Mucosa of descending colon (tissue), 3 donors: ENCODE measurements at regions of chr7 and their contacts with region 1.

Region 1: DNA sequence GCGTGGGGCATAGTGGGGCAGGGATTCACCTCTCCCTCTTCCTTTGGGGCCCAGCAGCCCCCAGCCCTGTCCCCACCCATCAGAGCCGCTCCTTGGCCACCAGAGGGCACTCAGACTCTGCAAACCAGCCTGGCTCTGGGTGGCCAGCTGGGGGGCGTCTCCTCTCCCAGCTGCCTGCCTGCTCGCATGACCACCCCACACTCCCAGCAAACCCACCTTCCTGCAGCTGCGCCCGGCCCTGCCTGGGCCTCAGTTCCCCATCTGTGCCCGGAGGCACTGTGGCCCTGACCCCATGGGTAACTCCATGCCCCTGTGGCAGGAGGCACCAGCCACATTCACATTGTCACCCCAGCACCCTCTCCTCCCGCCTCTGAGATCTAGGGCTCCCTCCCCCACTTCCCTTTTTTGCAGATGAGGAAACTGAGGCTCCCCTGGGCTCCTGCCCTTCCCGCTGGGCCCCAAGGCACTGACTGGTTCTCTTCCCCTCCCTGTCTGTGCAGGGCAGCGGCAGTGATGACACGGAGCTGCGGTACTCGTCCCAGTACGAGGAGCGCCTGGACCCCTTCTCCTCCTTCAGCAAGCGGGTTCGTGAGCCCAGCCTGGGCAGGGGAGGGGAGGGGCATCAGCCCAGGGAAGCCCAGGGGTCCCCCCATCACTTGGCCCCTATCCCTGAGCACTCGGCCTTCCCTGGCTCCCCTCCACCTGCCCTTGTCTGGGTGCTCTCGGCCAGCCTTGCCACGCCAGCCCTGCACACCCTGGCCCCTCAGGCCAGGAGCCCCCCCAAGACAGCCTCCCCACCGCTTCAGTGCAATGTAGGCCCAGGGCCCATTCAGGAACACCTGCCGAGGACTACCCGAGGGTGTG is 6.9 kb upstream of the SH2B2 start:
- DNase-seq: peak in 2 of 3 donors; percentile 48 to 55
- ATAC-seq: peak; percentile 72
- H3K4me3 ChIP-seq: no peak overlapping the region
- H3K4me1 ChIP-seq: peaks cover 4% of the 10 kb centered on the region
- CTCF ChIP-seq: peak; percentile 40

Region 2: GRCh38 chr7:102111061-102111743 is 168.6 kb before region 1 on chr7:
- intact Hi-C with region 1: no loop called
- DNase-seq: no peak
- ATAC-seq: no peak
- H3K4me3 ChIP-seq: no peak overlapping the region
- H3K4me1 ChIP-seq: no peaks in the 10 kb centered on the region
- CTCF ChIP-seq: no peak

Region 3: GRCh38 chr7:102147008-102147407 is 132.8 kb before region 1 on chr7:
- intact Hi-C with region 1: no loop called
- DNase-seq: no peak
- ATAC-seq: peak; percentile 26
- H3K4me3 ChIP-seq: no peak overlapping the region
- H3K4me1 ChIP-seq: no peaks in the 10 kb centered on the region
- CTCF ChIP-seq: no peak

Region 4: DNA sequence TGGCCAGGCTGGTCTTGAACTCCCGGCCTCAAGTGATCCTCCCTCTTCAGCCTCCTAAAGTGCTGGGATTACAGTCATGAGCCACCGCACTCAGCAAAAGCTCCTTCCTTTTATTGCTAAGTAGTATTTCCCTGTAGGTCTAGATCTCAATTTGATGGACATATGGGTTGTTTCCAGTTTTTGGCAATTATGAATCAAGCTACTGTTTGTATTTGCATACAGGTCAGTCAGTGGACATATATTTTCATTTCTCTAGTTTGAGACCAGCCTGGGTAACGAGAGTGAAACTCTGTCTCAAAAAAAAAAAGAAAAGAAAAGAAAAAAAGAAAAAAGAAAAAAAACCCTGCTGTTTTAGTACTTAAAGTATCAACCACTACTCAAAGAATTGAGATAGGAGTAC is 110.0 kb after region 1 on chr7:
- intact Hi-C with region 1: loop called (anchors 5 to 10 kb)
- DNase-seq: no peak
- ATAC-seq: no peak
- H3K4me3 ChIP-seq: no peak overlapping the region
- H3K4me1 ChIP-seq: no peaks in the 10 kb centered on the region
- CTCF ChIP-seq: no peak

Region 5: GRCh38 chr7:102396027-102397019 is 116.6 kb after region 1 on chr7 and contains the start of gene PRKRIP1:
- intact Hi-C with region 1: loop called in 1 of 2 experiments (anchors 10 kb)
- DNase-seq: peak; percentile 84 to 93 (median 90)
- ATAC-seq: peak; percentile 97
- H3K4me3 ChIP-seq: peak within 1 kb of the TSS; percentile 58
- H3K4me1 ChIP-seq: peaks cover 13% of the 10 kb centered on the region
- CTCF ChIP-seq: no peak
- total RNA-seq, gene PRKRIP1: 15.1 to 24.1 (median 18.6) TPM